PC-3 (cell line): ENCODE measurements at regions of chr5 and their contacts with region 1.

Region 1: GRCh38 chr5:148179234-148179824 is 11.0 kb downstream of the SPINK14 start:
- DNase-seq: peak; percentile 85
- ATAC-seq: peak; percentile 72; the same call in 1 of the 2 replicates
- H3K4me3 ChIP-seq: no peak overlapping the region
- H3K27ac ChIP-seq: no peak overlapping the region
- H3K4me1 ChIP-seq: no peaks in the 10 kb centered on the region
- H3K27me3 ChIP-seq: no peaks in the 10 kb centered on the region
- CTCF ChIP-seq: peak; percentile 96

Region 2: DNA sequence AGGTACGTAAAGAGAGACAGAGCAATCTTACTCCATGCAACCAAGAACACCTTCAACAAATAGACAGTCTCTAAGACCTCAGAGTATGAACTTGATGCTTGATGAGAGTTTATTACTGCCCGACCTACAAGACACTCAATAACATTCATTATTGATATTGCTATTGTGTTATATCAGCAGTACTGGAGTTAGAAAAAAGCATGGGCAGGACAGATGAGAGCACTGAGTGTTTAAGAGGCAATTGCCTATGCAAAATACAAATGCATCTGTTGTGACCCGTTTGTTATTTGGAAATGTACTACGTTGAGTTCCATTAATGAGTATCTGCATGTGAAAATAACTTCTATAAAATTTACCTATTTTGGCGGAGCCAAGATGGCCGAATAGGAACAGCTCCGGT is 50.9 kb after region 1 on chr5:
- CTCF ChIA-PET with region 1: no interaction called
- POLR2A ChIA-PET with region 1: no interaction called
- intact Hi-C with region 1: no loop called
- DNase-seq: no peak
- ATAC-seq: no peak
- H3K4me3 ChIP-seq: no peak overlapping the region
- H3K27ac ChIP-seq: no peak overlapping the region
- H3K4me1 ChIP-seq: no peaks in the 10 kb centered on the region
- H3K27me3 ChIP-seq: no peaks in the 10 kb centered on the region
- CTCF ChIP-seq: no peak

Region 3: GRCh38 chr5:148255456-148255855 is 76.1 kb after region 1 on chr5:
- CTCF ChIA-PET with region 1: interaction called, 3 read pairs
- POLR2A ChIA-PET with region 1: no interaction called
- intact Hi-C with region 1: loop called (anchors 2 kb)
- DNase-seq: peak; percentile 67
- ATAC-seq: peak; percentile 72
- H3K4me3 ChIP-seq: no peak overlapping the region
- H3K27ac ChIP-seq: peak overlapping the region; percentile 19; the same call in 1 of the 2 replicates
- H3K4me1 ChIP-seq: peaks cover 8% of the 10 kb centered on the region
- H3K27me3 ChIP-seq: no peaks in the 10 kb centered on the region
- CTCF ChIP-seq: no peak

Region 4: GRCh38 chr5:148306446-148306845 is 127.1 kb after region 1 on chr5:
- CTCF ChIA-PET with region 1: interaction called, 7 read pairs
- POLR2A ChIA-PET with region 1: no interaction called
- intact Hi-C with region 1: loop called (anchors 1 kb)
- DNase-seq: peak; percentile 42
- ATAC-seq: peak; percentile 90
- H3K4me3 ChIP-seq: no peak overlapping the region
- H3K27ac ChIP-seq: no peak overlapping the region
- H3K4me1 ChIP-seq: no peaks in the 10 kb centered on the region; the same call in 1 of the 2 replicates
- H3K27me3 ChIP-seq: no peaks in the 10 kb centered on the region
- CTCF ChIP-seq: peak; percentile 55

Region 5: GRCh38 chr5:148353634-148354033 is 174.3 kb after region 1 on chr5:
- CTCF ChIA-PET with region 1: no interaction called
- POLR2A ChIA-PET with region 1: no interaction called
- intact Hi-C with region 1: loop called (anchors 1 kb)
- DNase-seq: peak; percentile 51
- ATAC-seq: peak; percentile 43; the same call in 1 of the 2 replicates
- H3K4me3 ChIP-seq: no peak overlapping the region
- H3K27ac ChIP-seq: no peak overlapping the region
- H3K4me1 ChIP-seq: peaks cover 10% of the 10 kb centered on the region
- H3K27me3 ChIP-seq: no peaks in the 10 kb centered on the region
- CTCF ChIP-seq: peak; percentile 68

Region 6: DNA sequence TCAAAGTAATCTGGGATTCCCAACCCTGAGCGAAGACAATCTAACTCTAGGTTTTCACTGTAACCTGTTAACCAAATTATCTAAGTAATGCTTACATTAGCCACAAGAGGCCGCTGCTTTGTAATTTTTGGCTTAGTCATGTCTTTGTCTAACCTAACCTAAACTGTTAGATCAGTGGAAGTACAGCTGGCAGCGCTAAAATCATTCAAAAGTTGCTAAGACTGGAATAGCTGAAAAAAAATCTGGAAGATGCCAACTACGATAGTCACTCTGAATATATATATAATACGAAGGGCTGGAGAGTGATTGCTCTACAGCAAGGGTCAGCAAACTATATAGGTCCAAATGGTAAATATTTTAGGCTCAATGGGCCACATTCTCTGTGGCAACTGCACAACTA is 264.7 kb after region 1 on chr5:
- CTCF ChIA-PET with region 1: no interaction called
- POLR2A ChIA-PET with region 1: no interaction called
- intact Hi-C with region 1: loop called (anchors 5 kb)
- DNase-seq: peak; percentile 91
- ATAC-seq: peak; percentile 93
- H3K4me3 ChIP-seq: no peak overlapping the region
- H3K27ac ChIP-seq: no peak overlapping the region
- H3K4me1 ChIP-seq: no peaks in the 10 kb centered on the region
- H3K27me3 ChIP-seq: no peaks in the 10 kb centered on the region
- CTCF ChIP-seq: peak; percentile 97